Activated CD4-positive, alpha-beta memory T cell treated with anti-CD3 and anti-CD28 coated beads for 36 hours (primary cell): ENCODE measurements at regions of chr19 and their contacts with region 1.

Region 1: DNA sequence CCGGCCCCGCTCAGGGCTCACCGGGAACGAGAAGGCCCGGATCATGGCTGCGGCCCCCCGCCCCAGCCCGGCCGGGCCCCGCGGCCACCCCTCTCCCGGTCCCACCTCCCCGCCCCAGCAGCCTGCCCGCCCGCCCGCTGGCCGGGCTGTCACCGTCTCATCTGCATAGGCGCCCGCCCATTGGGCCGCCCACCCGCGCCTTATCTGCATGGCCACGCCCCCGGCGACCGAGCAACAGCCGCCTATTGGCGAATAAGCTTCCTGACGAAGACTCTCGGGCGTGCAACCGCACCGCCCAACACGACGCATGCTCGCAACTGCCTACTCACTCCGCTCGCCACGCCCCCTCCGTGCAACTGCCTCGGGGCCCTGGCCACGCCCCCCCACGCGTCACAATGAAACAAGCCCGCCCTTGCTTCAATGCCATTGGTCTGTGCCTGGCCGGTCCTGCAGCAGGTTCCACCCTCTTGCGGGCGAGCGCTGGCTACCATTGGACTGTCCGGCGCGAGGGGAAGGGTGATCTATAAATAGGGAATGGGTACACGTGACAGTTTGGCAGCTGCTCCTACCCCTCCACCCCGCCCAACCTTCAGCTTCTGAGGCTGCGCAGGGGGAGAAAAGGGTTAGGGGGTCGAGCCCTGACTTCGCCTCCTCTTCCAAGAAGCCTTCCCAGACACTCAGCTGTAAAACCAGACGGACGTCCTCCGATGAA is at the start of gene DACT3:
- DNase-seq: peak; percentile 100
- H3K4me3 Mint-ChIP-seq: peak within 1 kb of the TSS; percentile 69
- H3K27ac Mint-ChIP-seq: peak within 1 kb of the TSS; percentile 57
- H3K4me1 Mint-ChIP-seq: peaks cover 20% of the 10 kb centered on the region
- H3K27me3 Mint-ChIP-seq: peaks cover 19% of the 10 kb centered on the region
- total RNA-seq, gene DACT3: 2.8 to 3.0 TPM

Region 2: GRCh38 chr19:46529622-46530462 is 131.3 kb before region 1 on chr19:
- CTCF ChIA-PET with region 1: interaction called, 35 read pairs
- POLR2A ChIA-PET with region 1: no interaction called
- intact Hi-C with region 1: loop called (anchors 1 kb)
- DNase-seq: peak; percentile 82
- H3K4me3 Mint-ChIP-seq: no peak overlapping the region
- H3K27ac Mint-ChIP-seq: peak overlapping the region; percentile 42
- H3K4me1 Mint-ChIP-seq: peaks cover 14% of the 10 kb centered on the region
- H3K27me3 Mint-ChIP-seq: peaks cover 2% of the 10 kb centered on the region

Region 3: GRCh38 chr19:46537136-46538097 is 123.8 kb before region 1 on chr19:
- CTCF ChIA-PET with region 1: interaction called, 16 read pairs
- POLR2A ChIA-PET with region 1: no interaction called
- intact Hi-C with region 1: no loop called
- DNase-seq: peak; percentile 74
- H3K4me3 Mint-ChIP-seq: no peak overlapping the region
- H3K27ac Mint-ChIP-seq: no peak overlapping the region
- H3K4me1 Mint-ChIP-seq: peaks cover 4% of the 10 kb centered on the region
- H3K27me3 Mint-ChIP-seq: no peaks in the 10 kb centered on the region

Region 4: DNA sequence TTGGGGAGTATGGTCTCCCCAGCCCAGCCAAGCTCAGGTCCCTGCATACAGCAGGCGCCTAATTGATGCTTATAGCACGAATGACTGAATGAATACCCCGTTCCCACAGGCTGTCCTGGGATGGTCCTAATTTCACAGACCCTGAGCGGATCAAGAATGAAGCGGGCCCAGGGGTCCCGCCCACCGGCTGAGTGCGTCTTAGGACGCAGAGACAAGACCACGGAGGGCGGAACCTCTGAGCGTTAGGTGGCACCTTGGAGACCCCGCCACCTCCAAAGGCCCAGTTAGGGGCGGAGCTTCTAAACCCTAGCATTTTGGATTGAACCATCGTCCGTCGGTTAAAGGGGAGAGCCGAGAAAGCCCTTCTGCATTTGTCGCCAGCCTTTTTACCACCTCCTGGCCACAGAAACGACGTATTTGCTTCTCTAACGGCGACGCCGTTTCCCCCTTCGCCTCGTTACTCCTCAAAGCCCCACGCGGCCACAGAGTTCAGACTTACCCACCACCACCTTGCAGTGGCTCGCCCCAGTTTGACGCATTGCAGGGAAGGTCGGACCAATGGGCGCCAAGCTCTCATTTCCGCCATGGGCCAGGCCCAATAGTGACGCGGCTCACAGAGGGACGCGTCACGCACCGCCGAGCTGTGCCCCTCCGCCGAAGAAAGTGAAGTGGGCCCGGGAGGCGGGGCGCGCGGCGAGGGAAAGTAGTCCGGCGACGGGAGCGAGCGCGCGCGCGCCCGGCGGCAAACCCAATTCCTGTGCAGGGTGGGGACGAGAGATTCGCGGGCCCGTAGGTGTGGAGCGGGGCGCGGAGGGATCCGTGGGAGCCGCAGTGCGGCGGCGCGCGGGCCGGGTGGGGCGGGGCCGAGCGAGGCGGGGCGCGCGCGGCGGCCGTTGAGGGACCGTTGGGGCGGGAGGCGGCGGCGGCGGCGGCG is 60.5 kb before region 1 on chr19:
- CTCF ChIA-PET with region 1: interaction called, 40 read pairs
- POLR2A ChIA-PET with region 1: interaction called, 23 read pairs
- intact Hi-C with region 1: loop called (anchors 1 kb)
- DNase-seq: peak; percentile 97
- H3K4me3 Mint-ChIP-seq: peak overlapping the region; percentile 95
- H3K27ac Mint-ChIP-seq: peak overlapping the region; percentile 100
- H3K4me1 Mint-ChIP-seq: peaks cover 26% of the 10 kb centered on the region
- H3K27me3 Mint-ChIP-seq: no peaks in the 10 kb centered on the region

Region 5: DNA sequence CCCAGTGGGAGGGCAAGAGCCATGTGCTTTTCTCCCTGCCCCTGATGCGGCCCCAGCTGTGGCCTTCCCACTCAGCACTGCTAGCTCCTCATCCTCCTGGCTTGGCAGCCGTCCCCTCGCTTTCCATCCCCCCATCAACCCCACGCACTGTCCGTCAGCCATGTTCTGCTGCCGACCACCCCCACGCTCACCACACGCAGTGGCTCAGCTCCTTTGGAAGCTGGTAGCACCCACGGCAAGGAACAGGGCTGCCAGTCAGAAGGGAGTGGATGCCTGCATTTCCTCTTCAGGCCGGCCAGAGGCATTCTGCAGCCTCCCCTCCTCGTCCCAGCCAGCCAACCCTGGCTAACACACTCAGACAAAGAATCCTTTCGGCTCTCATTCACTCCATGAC is 53.7 kb before region 1 on chr19:
- CTCF ChIA-PET with region 1: interaction called, 319 read pairs
- POLR2A ChIA-PET with region 1: interaction called, 9 read pairs
- intact Hi-C with region 1: no loop called
- DNase-seq: no peak
- H3K4me3 Mint-ChIP-seq: no peak overlapping the region
- H3K27ac Mint-ChIP-seq: no peak overlapping the region
- H3K4me1 Mint-ChIP-seq: peaks cover 57% of the 10 kb centered on the region
- H3K27me3 Mint-ChIP-seq: no peaks in the 10 kb centered on the region

Region 6: GRCh38 chr19:46614114-46614722 is 47.0 kb before region 1 on chr19:
- CTCF ChIA-PET with region 1: interaction called, 319 read pairs
- POLR2A ChIA-PET with region 1: interaction called, 11 read pairs
- intact Hi-C with region 1: loop called (anchors 1 kb)
- DNase-seq: peak; percentile 91
- H3K4me3 Mint-ChIP-seq: no peak overlapping the region
- H3K27ac Mint-ChIP-seq: peak overlapping the region; percentile 78
- H3K4me1 Mint-ChIP-seq: peaks cover 64% of the 10 kb centered on the region
- H3K27me3 Mint-ChIP-seq: no peaks in the 10 kb centered on the region

Region 7: DNA sequence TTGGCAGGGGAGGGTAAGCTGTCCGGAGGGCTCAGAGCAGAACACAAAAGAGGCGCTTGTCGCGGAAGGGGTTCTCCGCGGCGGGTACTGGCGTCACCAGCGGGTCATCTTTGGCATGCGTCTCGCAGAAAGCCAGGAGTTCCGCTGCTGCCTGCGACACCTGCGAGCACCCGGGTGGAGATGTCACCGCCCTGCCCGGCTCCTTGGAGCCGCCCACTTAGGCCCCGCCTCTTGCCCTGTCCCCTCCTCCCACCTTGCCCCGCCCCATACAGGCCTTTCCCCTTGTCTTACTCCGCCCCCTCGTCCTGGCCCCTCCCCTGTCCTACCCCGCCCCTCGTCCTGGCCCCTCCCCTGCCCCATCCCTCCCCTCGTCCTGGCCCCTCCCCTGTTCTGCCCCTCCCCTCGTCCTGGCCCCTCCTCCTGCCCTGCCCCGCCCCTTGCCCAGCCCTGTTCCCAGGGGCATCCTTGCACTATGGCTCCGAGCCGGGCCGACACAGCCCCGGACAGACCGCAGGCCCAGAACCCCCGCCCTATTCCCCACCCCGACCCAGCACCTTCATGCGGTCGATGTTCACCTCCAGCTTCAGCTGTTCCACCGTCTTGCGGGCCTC is 27.0 kb before region 1 on chr19:
- CTCF ChIA-PET with region 1: interaction called, 14 read pairs
- POLR2A ChIA-PET with region 1: interaction called, 6 read pairs
- intact Hi-C with region 1: loop called (anchors 1 kb)
- DNase-seq: peak; percentile 99
- H3K4me3 Mint-ChIP-seq: peak overlapping the region; percentile 76
- H3K27ac Mint-ChIP-seq: peak overlapping the region; percentile 40
- H3K4me1 Mint-ChIP-seq: peaks cover 20% of the 10 kb centered on the region
- H3K27me3 Mint-ChIP-seq: no peaks in the 10 kb centered on the region

Region 8: DNA sequence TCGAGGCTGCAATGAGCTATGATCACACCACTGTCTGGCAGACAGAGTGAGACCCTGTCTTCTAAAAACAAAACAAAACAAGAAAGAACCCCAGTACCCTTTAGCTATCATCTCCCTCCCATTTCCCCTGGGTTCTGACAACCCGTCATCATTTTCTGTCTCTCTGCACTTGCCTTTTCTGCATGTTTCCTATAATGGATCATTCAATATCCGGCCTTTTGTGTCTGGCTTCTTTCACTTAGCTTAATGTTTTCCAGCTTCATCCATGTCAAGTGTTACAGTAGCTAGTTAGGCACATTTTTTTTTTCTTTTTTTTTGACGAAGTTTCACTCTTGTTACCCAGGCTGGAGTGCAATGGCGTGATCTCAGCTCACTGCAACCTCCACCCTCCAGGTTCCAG is 172.9 kb after region 1 on chr19:
- CTCF ChIA-PET with region 1: no interaction called
- POLR2A ChIA-PET with region 1: no interaction called
- intact Hi-C with region 1: no loop called
- DNase-seq: no peak
- H3K4me3 Mint-ChIP-seq: no peak overlapping the region
- H3K27ac Mint-ChIP-seq: no peak overlapping the region
- H3K4me1 Mint-ChIP-seq: peaks cover 1% of the 10 kb centered on the region
- H3K27me3 Mint-ChIP-seq: no peaks in the 10 kb centered on the region

Region 9: GRCh38 chr19:46925548-46925950 is 264.4 kb after region 1 on chr19:
- CTCF ChIA-PET with region 1: no interaction called
- POLR2A ChIA-PET with region 1: no interaction called
- intact Hi-C with region 1: no loop called
- DNase-seq: no peak
- H3K4me3 Mint-ChIP-seq: no peak overlapping the region
- H3K27ac Mint-ChIP-seq: no peak overlapping the region
- H3K4me1 Mint-ChIP-seq: peaks cover 50% of the 10 kb centered on the region
- H3K27me3 Mint-ChIP-seq: no peaks in the 10 kb centered on the region

Region 10: GRCh38 chr19:47019431-47020041 is 358.4 kb after region 1 on chr19 and contains the start of gene NPAS1:
- CTCF ChIA-PET with region 1: no interaction called
- POLR2A ChIA-PET with region 1: no interaction called
- intact Hi-C with region 1: no loop called
- DNase-seq: no peak
- H3K4me3 Mint-ChIP-seq: no peak within 1 kb of the TSS
- H3K27ac Mint-ChIP-seq: no peak within 1 kb of the TSS
- H3K4me1 Mint-ChIP-seq: peaks cover 15% of the 10 kb centered on the region
- H3K27me3 Mint-ChIP-seq: peaks cover 34% of the 10 kb centered on the region
- total RNA-seq, gene NPAS1: not detected